ENCODE measurements at regions of chr3 and their contacts with region 1.

Region 1: GRCh38 chr3:196837819-196838420 is 29.8 kb upstream of the SENP5 start:
- DNase-seq: peak; percentile 72
- ATAC-seq: peak; percentile 78
- H3K4me3 ChIP-seq: no peak overlapping the region
- H3K27ac ChIP-seq: peak overlapping the region; percentile 39
- H3K4me1 ChIP-seq: peaks cover 58% of the 10 kb centered on the region
- H3K27me3 ChIP-seq: no peaks in the 10 kb centered on the region
- CTCF ChIP-seq: peak; percentile 87
- EP300 ChIP-seq: no peak
- POLR2A ChIP-seq: no peak
- RAD21 ChIP-seq: peak; percentile 67; the same call in 1 of the 2 replicates

Region 2: GRCh38 chr3:196604548-196604947 is 233.4 kb before region 1 on chr3:
- CTCF ChIA-PET with region 1: no interaction called
- POLR2A ChIA-PET with region 1: no interaction called
- in situ Hi-C with region 1: no loop called
- intact Hi-C with region 1: no loop called
- DNase-seq: no peak
- ATAC-seq: peak; percentile 25; the same call in 2 of the 3 replicates
- H3K4me3 ChIP-seq: no peak overlapping the region
- H3K27ac ChIP-seq: no peak overlapping the region
- H3K4me1 ChIP-seq: peaks cover 27% of the 10 kb centered on the region
- H3K27me3 ChIP-seq: peaks cover 2 to 25% of the 10 kb centered on the region in 2 experiments; a peak in 4 of 5 replicates
- CTCF ChIP-seq: no peak
- EP300 ChIP-seq: no peak
- POLR2A ChIP-seq: no peak
- RAD21 ChIP-seq: no peak

Region 3: DNA sequence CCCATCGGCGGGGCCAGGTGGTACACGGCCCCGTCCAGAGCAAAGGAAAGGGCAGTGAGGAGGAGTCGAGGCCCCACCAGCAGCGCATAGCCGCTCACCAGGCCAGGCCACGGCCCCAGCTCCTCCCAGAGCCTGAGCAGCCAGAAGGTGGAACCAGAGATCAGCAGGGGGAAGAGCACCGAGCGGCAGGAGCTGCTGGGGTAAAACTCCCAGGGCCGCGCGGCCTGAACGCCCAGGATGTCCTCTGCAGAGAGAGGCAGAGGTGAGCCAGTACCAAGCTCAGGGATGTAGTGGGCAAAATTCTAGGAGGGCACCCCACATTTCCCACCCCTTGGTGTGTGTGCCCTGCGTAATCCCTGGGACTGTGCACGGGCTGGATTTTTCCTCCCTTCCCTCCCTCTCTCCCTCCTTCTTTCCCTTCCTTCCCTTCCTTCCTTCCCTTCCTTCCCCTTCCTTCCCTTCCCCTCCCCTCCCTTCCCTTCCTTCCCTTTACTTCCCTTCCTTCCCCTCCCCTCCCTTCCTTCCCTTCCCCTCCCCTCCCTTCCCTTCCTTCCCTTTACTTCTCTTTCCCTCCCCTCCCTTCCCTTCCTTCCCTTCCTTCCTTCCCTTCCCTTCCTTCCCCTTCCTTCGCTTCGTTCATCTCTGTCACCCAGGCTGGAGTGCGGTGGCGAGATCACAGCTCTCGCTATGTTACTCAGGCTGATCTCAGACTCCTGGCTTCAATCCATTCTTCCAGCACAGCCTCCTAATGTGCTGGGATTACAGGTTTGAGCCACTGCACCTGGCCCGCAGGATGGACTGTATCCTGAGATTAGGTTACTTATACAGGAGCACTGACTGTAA is 110.7 kb after region 1 on chr3:
- CTCF ChIA-PET with region 1: no interaction called
- POLR2A ChIA-PET with region 1: no interaction called
- in situ Hi-C with region 1: no loop called
- intact Hi-C with region 1: loop called (anchors 2 kb)
- DNase-seq: peak; percentile 63
- ATAC-seq: peak; percentile 90
- H3K4me3 ChIP-seq: peak overlapping the region in 2 of 3 experiments; percentile 11 to 44; a peak in 3 of 6 replicates
- H3K27ac ChIP-seq: peak overlapping the region; percentile 41
- H3K4me1 ChIP-seq: peaks cover 95% of the 10 kb centered on the region
- H3K27me3 ChIP-seq: no peaks in the 10 kb centered on the region; a peak in 1 of 5 replicates
- CTCF ChIP-seq: peak; percentile 91
- EP300 ChIP-seq: no peak
- POLR2A ChIP-seq: peak in 1 of 2 experiments; percentile 20; a peak in 1 of 4 replicates
- RAD21 ChIP-seq: peak; percentile 85

Measured in HepG2 (cell line).